Activated CD8-positive, alpha-beta memory T cell treated with anti-CD3 and anti-CD28 coated beads, Interleukin-2, amount 10 ng/mL, durations not matched to agents 7 days and 5 days (primary cell): ENCODE measurements at regions of chr15 and their contacts with region 1.

Region 1: DNA sequence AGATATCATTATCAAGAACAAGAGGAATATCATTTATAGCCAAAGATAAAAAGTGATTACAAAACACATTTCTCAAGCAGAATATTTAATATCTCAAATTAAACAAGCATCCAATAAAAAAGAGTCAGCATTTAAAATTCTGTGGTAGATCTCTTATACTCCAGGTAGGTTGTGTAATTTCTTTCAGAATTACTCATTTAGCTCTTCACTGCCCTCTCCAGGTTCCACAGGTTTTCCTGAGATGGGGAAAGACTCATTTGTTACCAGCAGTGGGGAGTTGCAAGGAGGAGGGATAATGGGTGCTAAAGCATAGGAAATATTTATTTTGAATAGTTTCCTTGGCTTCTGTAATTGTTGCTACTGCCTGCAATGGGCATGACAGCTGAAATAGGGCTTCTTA is 83.1 kb upstream of the RASGRP1 start:
- DNase-seq: no peak
- ATAC-seq: no peak
- H3K4me3 Mint-ChIP-seq: no peak overlapping the region
- H3K27ac Mint-ChIP-seq: no peak overlapping the region
- H3K4me1 Mint-ChIP-seq: peaks cover 58% of the 10 kb centered on the region
- H3K27me3 Mint-ChIP-seq: no peaks in the 10 kb centered on the region

Region 2: DNA sequence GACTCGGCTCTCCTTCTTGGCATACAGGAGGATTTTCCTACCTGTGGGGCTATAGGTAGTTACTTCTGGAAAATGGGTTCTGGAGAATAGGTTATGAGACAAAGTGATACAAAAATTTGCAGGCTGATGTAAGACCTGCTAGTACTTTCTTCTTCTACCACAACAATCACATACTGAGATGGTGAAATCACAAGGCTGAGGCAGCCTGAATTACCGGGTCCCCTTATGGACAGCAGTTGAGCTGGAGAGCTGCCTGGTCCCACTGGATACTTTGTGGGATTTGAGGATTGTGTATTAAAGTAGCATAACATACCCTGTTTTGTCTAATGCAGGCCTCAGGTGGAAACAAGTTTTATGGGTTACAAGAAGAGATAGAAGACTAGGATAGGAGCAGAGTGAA is 280.2 kb before region 1 on chr15:
- CTCF ChIA-PET with region 1: no interaction called
- DNase-seq: no peak
- ATAC-seq: no peak
- H3K4me3 Mint-ChIP-seq: no peak overlapping the region
- H3K27ac Mint-ChIP-seq: no peak overlapping the region
- H3K4me1 Mint-ChIP-seq: no peaks in the 10 kb centered on the region
- H3K27me3 Mint-ChIP-seq: peaks cover 38% of the 10 kb centered on the region

Region 3: DNA sequence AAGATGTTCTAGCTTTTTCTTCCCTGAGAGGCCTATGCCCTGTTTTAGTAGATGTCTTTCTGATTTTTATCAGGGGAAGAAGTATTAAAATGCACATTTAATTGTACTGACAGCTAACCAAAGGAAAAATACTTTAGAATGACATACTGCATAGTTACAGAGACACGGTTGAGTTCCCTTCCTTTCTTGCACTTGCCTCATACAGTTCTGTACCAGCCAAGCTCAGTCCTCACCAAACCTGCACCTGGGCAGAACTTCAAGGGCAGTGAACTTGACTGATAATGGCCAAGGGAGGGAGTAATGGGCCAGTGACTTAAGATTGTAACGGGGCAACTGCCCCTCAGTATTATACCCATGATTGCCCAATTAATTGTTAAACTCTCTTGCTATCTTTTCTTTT is 48.9 kb before region 1 on chr15:
- CTCF ChIA-PET with region 1: no interaction called
- DNase-seq: no peak
- ATAC-seq: no peak
- H3K4me3 Mint-ChIP-seq: no peak overlapping the region
- H3K27ac Mint-ChIP-seq: no peak overlapping the region
- H3K4me1 Mint-ChIP-seq: no peaks in the 10 kb centered on the region
- H3K27me3 Mint-ChIP-seq: no peaks in the 10 kb centered on the region

Region 4: GRCh38 chr15:38610748-38611147 is 36.9 kb before region 1 on chr15:
- CTCF ChIA-PET with region 1: interaction called, 10 read pairs
- DNase-seq: peak; percentile 74
- ATAC-seq: peak; percentile 73
- H3K4me3 Mint-ChIP-seq: peak overlapping the region; percentile 53
- H3K27ac Mint-ChIP-seq: peak overlapping the region; percentile 93
- H3K4me1 Mint-ChIP-seq: peaks cover 67% of the 10 kb centered on the region
- H3K27me3 Mint-ChIP-seq: no peaks in the 10 kb centered on the region

Region 5: GRCh38 chr15:38660738-38661137 is 13.1 kb after region 1 on chr15:
- CTCF ChIA-PET with region 1: interaction called, 178 read pairs
- DNase-seq: peak; percentile 54
- ATAC-seq: peak; percentile 70
- H3K4me3 Mint-ChIP-seq: no peak overlapping the region
- H3K27ac Mint-ChIP-seq: peak overlapping the region; percentile 76
- H3K4me1 Mint-ChIP-seq: peaks cover 49% of the 10 kb centered on the region
- H3K27me3 Mint-ChIP-seq: no peaks in the 10 kb centered on the region

Region 6: GRCh38 chr15:38671675-38672254 is 24.1 kb after region 1 on chr15:
- CTCF ChIA-PET with region 1: interaction called, 178 read pairs
- DNase-seq: peak; percentile 56
- ATAC-seq: peak; percentile 31
- H3K4me3 Mint-ChIP-seq: peak overlapping the region; percentile 51
- H3K27ac Mint-ChIP-seq: peak overlapping the region; percentile 98
- H3K4me1 Mint-ChIP-seq: peaks cover 80% of the 10 kb centered on the region
- H3K27me3 Mint-ChIP-seq: no peaks in the 10 kb centered on the region

Region 7: GRCh38 chr15:38724827-38725226 is 77.1 kb after region 1 on chr15:
- CTCF ChIA-PET with region 1: no interaction called
- DNase-seq: no peak
- ATAC-seq: no peak
- H3K4me3 Mint-ChIP-seq: no peak overlapping the region
- H3K27ac Mint-ChIP-seq: no peak overlapping the region
- H3K4me1 Mint-ChIP-seq: no peaks in the 10 kb centered on the region
- H3K27me3 Mint-ChIP-seq: peaks cover 2% of the 10 kb centered on the region